Ascending aorta (tissue), 2 donors: ENCODE measurements at regions of chr19 and their contacts with region 1.

Region 1: DNA sequence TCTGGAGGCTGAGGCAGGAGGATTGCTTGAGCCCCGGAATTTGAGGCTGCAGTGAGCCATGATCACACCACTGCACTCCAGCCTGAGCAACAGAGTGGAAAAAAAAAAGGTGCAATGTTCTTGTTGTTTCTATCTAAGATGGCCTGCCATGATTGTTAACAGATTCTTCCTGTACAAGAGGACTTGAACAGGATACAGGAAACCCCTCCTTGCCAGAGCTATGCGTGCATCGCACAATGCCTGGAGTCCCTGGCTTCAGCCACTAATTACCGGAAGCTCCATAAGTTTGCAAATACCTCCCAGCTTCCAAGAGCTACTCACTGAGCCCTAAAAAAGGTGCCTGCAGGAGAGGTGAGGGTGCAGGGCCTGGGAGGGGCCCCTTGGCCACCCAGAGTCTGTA is 13.1 kb upstream of the HIF3A start:
- DNase-seq: no peak
- H3K4me3 ChIP-seq: no peak overlapping the region
- H3K27ac ChIP-seq: no peak overlapping the region
- H3K4me1 ChIP-seq: no peaks in the 10 kb centered on the region
- H3K27me3 ChIP-seq: no peaks in the 10 kb centered on the region
- CTCF ChIP-seq: no peak

Region 2: GRCh38 chr19:46330319-46330918 is 46.6 kb after region 1 on chr19:
- intact Hi-C with region 1: loop called (anchors 5 kb)
- DNase-seq: no peak
- H3K4me3 ChIP-seq: no peak overlapping the region
- H3K27ac ChIP-seq: no peak overlapping the region
- H3K4me1 ChIP-seq: no peaks in the 10 kb centered on the region
- H3K27me3 ChIP-seq: no peaks in the 10 kb centered on the region
- CTCF ChIP-seq: no peak

Region 3: DNA sequence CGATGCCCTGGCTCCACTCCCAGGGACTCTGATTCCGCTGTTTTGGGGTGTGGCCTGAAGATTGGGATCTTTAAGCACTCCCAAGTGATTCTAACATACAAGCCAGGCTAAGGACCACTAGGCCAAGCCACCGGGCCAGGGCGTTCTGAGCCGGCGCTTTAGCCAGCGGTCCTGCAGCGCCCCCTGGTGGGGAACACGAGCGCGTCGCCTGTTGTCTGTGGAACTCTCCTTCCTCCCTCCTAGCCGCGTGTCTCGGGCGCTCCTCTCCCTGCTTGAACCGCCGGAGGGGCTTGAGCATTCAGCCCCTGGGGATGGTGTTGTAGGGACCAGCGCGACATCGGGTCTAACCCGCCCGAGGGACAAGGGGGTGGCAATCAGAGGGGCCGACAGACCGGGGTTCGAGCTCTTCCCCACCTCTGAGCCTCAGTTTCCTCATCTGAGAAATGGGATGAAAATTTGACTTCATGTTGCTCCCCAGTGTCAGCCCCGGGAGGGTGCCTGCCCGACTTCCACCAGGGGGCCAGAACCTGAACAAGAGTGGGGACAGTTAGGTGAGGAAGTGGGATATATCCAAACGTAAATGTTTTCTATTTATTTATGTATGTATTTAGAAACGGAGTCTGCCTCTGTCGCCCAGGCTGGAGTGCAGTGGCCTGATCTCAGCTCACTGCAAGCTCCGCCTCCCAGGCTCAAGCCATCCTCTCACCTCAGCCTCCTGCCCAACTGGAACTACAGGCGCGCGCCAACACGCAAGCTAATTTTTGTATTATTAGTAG is 229.9 kb after region 1 on chr19:
- intact Hi-C with region 1: loop called (anchors 1 kb)
- DNase-seq: peak in 1 of 2 donors; percentile 85
- H3K4me3 ChIP-seq: peak overlapping the region in 1 of 2 donors; percentile 13
- H3K27ac ChIP-seq: peak overlapping the region in 1 of 2 donors; percentile 5
- H3K4me1 ChIP-seq: peaks cover 3 to 14% of the 10 kb centered on the region in 2 donors
- H3K27me3 ChIP-seq: no peaks in the 10 kb centered on the region
- CTCF ChIP-seq: peak; percentile 97 to 99 (median 98)

Region 4: GRCh38 chr19:47839913-47840312 is 1556.1 kb after region 1 on chr19:
- intact Hi-C with region 1: no loop called
- DNase-seq: no peak
- H3K4me3 ChIP-seq: no peak overlapping the region
- H3K27ac ChIP-seq: no peak overlapping the region
- H3K4me1 ChIP-seq: no peaks in the 10 kb centered on the region
- H3K27me3 ChIP-seq: no peaks in the 10 kb centered on the region
- CTCF ChIP-seq: no peak